Gastrocnemius medialis (tissue), 4 donors: ENCODE measurements at regions of chr6 and their contacts with region 1.

Region 1: GRCh38 chr6:17469006-17469832 is 75.8 kb downstream of the CAP2 start:
- DNase-seq: no peak
- ATAC-seq: peak in 1 of 2 donors; percentile 26
- H3K4me3 ChIP-seq: no peak overlapping the region
- H3K27ac ChIP-seq: peak overlapping the region; percentile 83 to 98 (median 93)
- H3K4me1 ChIP-seq: peaks cover 61 to 72% of the 10 kb centered on the region in 2 donors
- H3K27me3 ChIP-seq: no peaks in the 10 kb centered on the region
- CTCF ChIP-seq: peak; percentile 38 to 54 (median 42)
- POLR2A ChIP-seq: no peak

Region 2: DNA sequence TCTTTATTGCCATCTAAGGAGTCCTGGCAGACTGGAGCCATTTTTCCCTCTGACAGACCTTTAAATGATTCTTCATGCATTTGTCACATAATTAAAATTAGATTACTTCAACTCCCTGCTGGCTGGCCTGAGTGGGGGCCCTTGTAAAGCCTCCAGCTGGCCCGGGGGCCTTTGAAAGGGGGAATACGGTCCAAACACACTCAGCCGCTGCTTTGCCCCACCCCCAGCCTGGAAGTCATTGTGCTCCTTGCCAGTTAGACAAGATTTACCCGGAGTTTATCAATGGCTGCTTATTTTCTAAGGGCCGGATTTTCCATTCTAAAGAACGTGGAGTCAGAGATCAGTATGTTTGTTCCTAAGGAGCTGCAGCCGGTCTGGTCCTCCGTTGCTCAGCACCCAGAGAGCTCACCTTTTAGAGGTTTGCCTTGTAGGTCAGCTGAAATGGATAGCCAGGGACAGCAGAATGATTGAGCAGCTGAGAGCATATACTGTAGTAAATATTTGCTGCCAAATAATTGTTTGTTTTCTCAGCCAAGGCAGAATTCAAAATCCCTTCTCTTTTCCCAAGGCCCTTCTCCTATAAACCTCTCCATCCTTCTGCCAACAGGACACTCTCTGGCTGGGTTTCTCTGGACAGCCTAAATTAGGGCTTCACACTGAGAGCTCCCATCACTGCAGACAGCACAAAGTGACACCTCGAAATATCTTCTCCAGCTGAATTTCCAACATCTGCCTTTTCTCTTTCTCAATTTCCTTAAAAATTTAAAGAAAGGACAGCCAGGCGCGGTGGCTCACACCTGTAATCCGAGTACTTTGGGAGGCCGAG is 256.5 kb before region 1 on chr6:
- in situ Hi-C with region 1: no loop called
- intact Hi-C with region 1: loop called (anchors 5 kb)
- DNase-seq: peak; percentile 24 to 70
- ATAC-seq: peak; percentile 70 to 71
- H3K4me3 ChIP-seq: peak overlapping the region in 2 of 4 donors; percentile 5
- H3K27ac ChIP-seq: peak overlapping the region; percentile 79 to 90 (median 88)
- H3K4me1 ChIP-seq: peaks cover 22 to 29% of the 10 kb centered on the region in 2 donors
- H3K27me3 ChIP-seq: no peaks in the 10 kb centered on the region
- CTCF ChIP-seq: no peak
- POLR2A ChIP-seq: no peak

Region 3: DNA sequence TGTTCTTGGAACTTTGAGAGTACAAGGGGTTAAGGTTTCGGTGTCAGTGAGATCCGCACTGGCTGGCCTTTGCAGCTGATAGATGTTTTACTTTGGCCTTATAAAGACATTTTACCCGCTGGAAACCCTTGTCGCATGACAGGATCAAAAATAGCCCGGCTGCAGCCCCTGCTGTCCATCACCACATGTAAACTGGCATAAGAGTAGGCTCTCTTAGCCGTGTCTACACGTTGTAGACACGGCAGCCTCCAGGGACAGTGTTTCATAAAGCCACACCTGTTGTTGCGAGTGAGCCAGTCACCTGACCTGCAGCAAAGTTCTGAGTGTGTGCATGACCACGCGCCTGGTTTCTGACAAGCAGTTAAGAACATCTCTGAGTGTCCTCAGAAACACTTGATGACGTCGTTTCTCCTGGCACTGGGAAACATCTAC is 179.6 kb before region 1 on chr6:
- in situ Hi-C with region 1: loop called in 1 of 4 experiments (anchors 10 kb)
- intact Hi-C with region 1: loop called (anchors 5 kb)
- DNase-seq: peak; percentile 96 to 99
- ATAC-seq: peak; percentile 85 to 87
- H3K4me3 ChIP-seq: peak overlapping the region; percentile 38 to 94 (median 62)
- H3K27ac ChIP-seq: peak overlapping the region; percentile 93 to 100 (median 96)
- H3K4me1 ChIP-seq: peaks cover 23 to 81% of the 10 kb centered on the region in 2 donors
- H3K27me3 ChIP-seq: no peaks in the 10 kb centered on the region
- CTCF ChIP-seq: peak in 1 of 5 experiments; percentile 16
- POLR2A ChIP-seq: peak; percentile 64 to 83

Region 4: GRCh38 chr6:17392978-17393891 is 76.0 kb before region 1 on chr6 and contains the start of gene CAP2:
- in situ Hi-C with region 1: no loop called
- intact Hi-C with region 1: loop called (anchors 5 kb)
- DNase-seq: peak; percentile 72 to 87
- ATAC-seq: peak; percentile 84 to 85
- H3K4me3 ChIP-seq: peak within 1 kb of the TSS; percentile 80 to 86 (median 80)
- H3K27ac ChIP-seq: peak within 1 kb of the TSS; percentile 96 to 97 (median 96)
- H3K4me1 ChIP-seq: peaks cover 11 to 39% of the 10 kb centered on the region in 2 donors
- H3K27me3 ChIP-seq: no peaks in the 10 kb centered on the region
- CTCF ChIP-seq: no peak
- POLR2A ChIP-seq: peak; percentile 90
- total RNA-seq, gene CAP2: 208 to 439 (median 295) TPM

Region 5: DNA sequence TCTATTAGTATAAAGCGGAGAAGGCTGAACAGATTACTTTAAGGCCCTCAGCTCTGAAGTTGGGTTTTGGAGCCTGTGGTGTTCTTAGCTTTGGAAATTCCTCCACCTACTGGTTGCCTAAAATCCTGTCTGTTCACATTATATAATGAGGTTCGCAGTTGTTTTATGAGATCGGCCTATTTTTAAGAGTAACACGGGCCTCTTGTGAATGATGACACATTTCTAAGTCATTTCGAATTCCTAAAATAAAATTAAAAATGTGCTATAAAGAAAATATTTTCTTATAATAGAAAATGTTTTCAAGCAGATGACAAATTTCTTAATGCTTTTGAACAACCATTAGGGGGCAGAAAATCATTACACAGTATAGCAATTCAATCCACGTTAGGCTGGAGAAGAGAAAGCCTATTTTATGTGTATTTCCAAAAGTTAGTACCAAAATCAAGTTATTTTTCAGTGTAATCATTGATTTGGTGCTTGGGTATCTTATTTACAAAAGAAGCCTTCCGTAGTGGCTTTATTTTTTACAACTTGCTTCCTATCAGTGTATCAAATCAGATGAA is 115.1 kb after region 1 on chr6:
- in situ Hi-C with region 1: loop called in 1 of 4 experiments (anchors 5 kb)
- intact Hi-C with region 1: loop called (anchors 5 kb)
- DNase-seq: peak in 1 of 2 donors; percentile 33
- ATAC-seq: peak; percentile 92 to 93
- H3K4me3 ChIP-seq: peak overlapping the region; percentile 2 to 48 (median 32)
- H3K27ac ChIP-seq: peak overlapping the region; percentile 66 to 85 (median 75)
- H3K4me1 ChIP-seq: peaks cover 7 to 8% of the 10 kb centered on the region in 2 donors
- H3K27me3 ChIP-seq: no peaks in the 10 kb centered on the region
- CTCF ChIP-seq: peak; percentile 78 to 97 (median 86)
- POLR2A ChIP-seq: no peak